ENCODE measurements at regions of chr12 and their contacts with region 1.

Region 1: GRCh38 chr12:92145731-92146496 is at the start of gene BTG1:
- DNase-seq: peak; percentile 96 to 100 (median 98)
- ATAC-seq: peak; percentile 72
- H3K4me3 ChIP-seq: peak within 1 kb of the TSS; percentile 91 to 95
- H3K4me3 Mint-ChIP-seq: peak within 1 kb of the TSS; percentile 96
- H3K27ac ChIP-seq: peak within 1 kb of the TSS; percentile 90 to 92
- H3K27ac Mint-ChIP-seq: peak within 1 kb of the TSS; percentile 99
- H3K4me1 ChIP-seq: peaks cover 23% of the 10 kb centered on the region
- H3K4me1 Mint-ChIP-seq: peaks cover 27% of the 10 kb centered on the region
- H3K27me3 ChIP-seq: no peaks in the 10 kb centered on the region
- H3K27me3 Mint-ChIP-seq: no peaks in the 10 kb centered on the region
- CTCF ChIP-seq: no peak
- total RNA-seq, gene BTG1: 1,847 to 1,850 TPM

Region 2: DNA sequence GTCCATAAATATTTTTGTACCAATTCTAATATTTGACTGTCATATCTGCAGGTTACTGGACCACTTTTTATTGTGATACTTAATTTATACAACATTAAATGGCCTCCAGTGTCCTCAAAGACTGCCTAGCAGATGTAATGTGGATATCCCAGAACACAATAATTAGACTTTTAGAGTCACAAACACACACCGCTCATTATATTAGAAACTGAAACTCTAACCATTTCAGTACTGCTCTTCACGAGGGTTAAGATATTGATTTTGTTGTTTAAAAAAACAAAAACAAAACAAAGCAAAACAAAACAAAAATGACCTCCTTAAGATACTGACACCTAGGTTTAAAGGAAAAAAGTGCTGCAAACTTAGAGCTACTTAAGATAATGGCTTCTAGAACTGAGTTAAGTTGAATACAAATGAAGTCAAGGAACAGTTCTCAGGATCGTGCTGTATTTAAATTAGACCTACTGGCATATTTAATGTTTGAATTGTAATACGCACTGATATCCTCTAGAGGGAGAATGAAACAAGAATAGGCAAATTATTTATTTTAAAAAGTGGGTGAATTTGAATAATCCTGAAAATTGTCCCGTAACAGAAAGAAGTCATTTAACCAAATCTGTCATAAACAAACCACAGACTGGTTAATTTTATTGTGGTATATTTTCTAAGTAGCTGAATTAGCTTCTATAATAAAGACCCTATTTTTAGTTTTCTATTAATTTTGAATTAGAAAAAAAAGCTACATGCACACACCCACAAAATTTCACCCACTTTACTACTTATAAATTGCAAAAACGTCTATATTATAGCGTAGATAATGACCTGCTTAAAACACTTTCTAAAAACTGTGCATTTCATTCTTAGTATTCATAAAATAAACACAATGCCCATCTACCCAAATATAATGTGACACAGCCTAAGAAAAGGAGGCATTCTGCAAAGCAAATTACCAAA is 568.1 kb before region 1 on chr12:
- CTCF ChIA-PET with region 1: interaction called, 9 read pairs
- POLR2A ChIA-PET with region 1: interaction called, 4 read pairs
- intact Hi-C with region 1: loop called (anchors 1 to 5 kb)
- DNase-seq: peak in 2 of 9 experiments; percentile 37 to 59
- ATAC-seq: peak; percentile 85
- H3K4me3 ChIP-seq: peak overlapping the region; percentile 34 to 39
- H3K4me3 Mint-ChIP-seq: peak overlapping the region; percentile 77
- H3K27ac ChIP-seq: no peak overlapping the region
- H3K27ac Mint-ChIP-seq: peak overlapping the region; percentile 50
- H3K4me1 ChIP-seq: no peaks in the 10 kb centered on the region
- H3K4me1 Mint-ChIP-seq: peaks cover 14% of the 10 kb centered on the region
- H3K27me3 ChIP-seq: no peaks in the 10 kb centered on the region
- H3K27me3 Mint-ChIP-seq: no peaks in the 10 kb centered on the region
- CTCF ChIP-seq: peak; percentile 87

Region 3: DNA sequence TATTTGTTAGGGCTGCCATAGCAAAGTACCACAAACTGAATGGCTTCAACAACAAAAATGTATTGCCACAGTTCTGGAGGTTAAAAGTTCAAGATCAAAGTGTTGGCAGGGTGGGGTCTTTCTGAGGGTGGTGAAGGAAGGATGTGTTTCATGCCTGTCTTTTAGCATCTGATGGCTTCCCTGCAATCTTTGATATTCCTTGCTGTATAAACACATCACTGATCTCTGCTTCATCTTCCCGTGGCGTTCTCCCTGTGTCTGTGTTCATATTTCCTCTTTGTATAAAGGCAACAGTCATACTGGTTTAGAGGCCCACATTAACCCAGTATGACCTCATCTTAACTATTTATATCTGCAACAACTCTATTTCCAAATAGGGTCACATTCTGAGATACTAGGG is 167.8 kb before region 1 on chr12:
- CTCF ChIA-PET with region 1: no interaction called
- POLR2A ChIA-PET with region 1: interaction called, 13 read pairs
- intact Hi-C with region 1: no loop called
- DNase-seq: peak in 8 of 9 experiments; percentile 7 to 87 (median 48)
- ATAC-seq: peak; percentile 85
- H3K4me3 ChIP-seq: no peak overlapping the region
- H3K4me3 Mint-ChIP-seq: peak overlapping the region; percentile 2
- H3K27ac ChIP-seq: peak overlapping the region; percentile 40 to 49
- H3K27ac Mint-ChIP-seq: peak overlapping the region; percentile 74
- H3K4me1 ChIP-seq: peaks cover 22% of the 10 kb centered on the region
- H3K4me1 Mint-ChIP-seq: peaks cover 60% of the 10 kb centered on the region
- H3K27me3 ChIP-seq: no peaks in the 10 kb centered on the region
- H3K27me3 Mint-ChIP-seq: no peaks in the 10 kb centered on the region
- CTCF ChIP-seq: no peak

Region 4: GRCh38 chr12:92041742-92042141 is 104.2 kb before region 1 on chr12:
- CTCF ChIA-PET with region 1: interaction called, 4 read pairs
- POLR2A ChIA-PET with region 1: interaction called, 19 read pairs
- intact Hi-C with region 1: no loop called
- DNase-seq: peak in 5 of 9 experiments; percentile 24 to 62 (median 36)
- ATAC-seq: peak; percentile 90
- H3K4me3 ChIP-seq: no peak overlapping the region
- H3K4me3 Mint-ChIP-seq: peak overlapping the region; percentile 59
- H3K27ac ChIP-seq: no peak overlapping the region
- H3K27ac Mint-ChIP-seq: peak overlapping the region; percentile 85
- H3K4me1 ChIP-seq: peaks cover 58% of the 10 kb centered on the region
- H3K4me1 Mint-ChIP-seq: peaks cover 75% of the 10 kb centered on the region
- H3K27me3 ChIP-seq: no peaks in the 10 kb centered on the region
- H3K27me3 Mint-ChIP-seq: no peaks in the 10 kb centered on the region
- CTCF ChIP-seq: peak; percentile 26

Region 5: GRCh38 chr12:92208613-92209121 is 62.8 kb after region 1 on chr12:
- CTCF ChIA-PET with region 1: interaction called, 4 read pairs
- POLR2A ChIA-PET with region 1: interaction called, 99 read pairs
- intact Hi-C with region 1: loop called (anchors 1 to 5 kb)
- DNase-seq: peak in 7 of 9 experiments; percentile 25 to 74 (median 32)
- ATAC-seq: peak; percentile 83
- H3K4me3 ChIP-seq: peak overlapping the region; percentile 28 to 32
- H3K4me3 Mint-ChIP-seq: peak overlapping the region; percentile 67
- H3K27ac ChIP-seq: peak overlapping the region; percentile 26 to 34
- H3K27ac Mint-ChIP-seq: peak overlapping the region; percentile 92
- H3K4me1 ChIP-seq: peaks cover 27% of the 10 kb centered on the region
- H3K4me1 Mint-ChIP-seq: peaks cover 40% of the 10 kb centered on the region
- H3K27me3 ChIP-seq: no peaks in the 10 kb centered on the region
- H3K27me3 Mint-ChIP-seq: no peaks in the 10 kb centered on the region
- CTCF ChIP-seq: no peak

Region 6: DNA sequence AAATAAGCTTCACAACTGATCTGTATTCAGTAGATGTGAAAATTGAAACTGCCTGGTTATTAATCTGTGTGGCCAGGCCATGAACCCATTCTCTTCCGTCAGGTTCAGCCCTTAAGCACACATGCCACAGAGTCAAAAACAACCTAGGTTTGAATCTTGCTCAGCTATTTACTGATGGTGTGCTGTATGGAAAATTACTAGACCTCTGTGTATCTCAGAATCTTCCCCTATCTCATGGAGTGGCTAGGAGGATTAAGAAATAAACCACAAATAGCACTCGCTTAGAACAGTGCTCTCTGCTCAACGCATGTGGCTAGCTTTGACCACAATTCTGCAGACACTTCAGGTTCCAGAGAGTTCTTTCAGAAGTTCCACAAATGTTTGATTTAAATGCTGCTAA is 316.1 kb after region 1 on chr12:
- CTCF ChIA-PET with region 1: no interaction called
- POLR2A ChIA-PET with region 1: interaction called, 11 read pairs
- intact Hi-C with region 1: no loop called
- DNase-seq: peak in 2 of 9 experiments; percentile 52 to 68
- ATAC-seq: peak; percentile 54
- H3K4me3 ChIP-seq: no peak overlapping the region
- H3K4me3 Mint-ChIP-seq: no peak overlapping the region
- H3K27ac ChIP-seq: peak overlapping the region in 1 of 2 experiments; percentile 75
- H3K27ac Mint-ChIP-seq: peak overlapping the region; percentile 70
- H3K4me1 ChIP-seq: peaks cover 25% of the 10 kb centered on the region
- H3K4me1 Mint-ChIP-seq: peaks cover 33% of the 10 kb centered on the region
- H3K27me3 ChIP-seq: no peaks in the 10 kb centered on the region
- H3K27me3 Mint-ChIP-seq: no peaks in the 10 kb centered on the region
- CTCF ChIP-seq: no peak

Region 7: DNA sequence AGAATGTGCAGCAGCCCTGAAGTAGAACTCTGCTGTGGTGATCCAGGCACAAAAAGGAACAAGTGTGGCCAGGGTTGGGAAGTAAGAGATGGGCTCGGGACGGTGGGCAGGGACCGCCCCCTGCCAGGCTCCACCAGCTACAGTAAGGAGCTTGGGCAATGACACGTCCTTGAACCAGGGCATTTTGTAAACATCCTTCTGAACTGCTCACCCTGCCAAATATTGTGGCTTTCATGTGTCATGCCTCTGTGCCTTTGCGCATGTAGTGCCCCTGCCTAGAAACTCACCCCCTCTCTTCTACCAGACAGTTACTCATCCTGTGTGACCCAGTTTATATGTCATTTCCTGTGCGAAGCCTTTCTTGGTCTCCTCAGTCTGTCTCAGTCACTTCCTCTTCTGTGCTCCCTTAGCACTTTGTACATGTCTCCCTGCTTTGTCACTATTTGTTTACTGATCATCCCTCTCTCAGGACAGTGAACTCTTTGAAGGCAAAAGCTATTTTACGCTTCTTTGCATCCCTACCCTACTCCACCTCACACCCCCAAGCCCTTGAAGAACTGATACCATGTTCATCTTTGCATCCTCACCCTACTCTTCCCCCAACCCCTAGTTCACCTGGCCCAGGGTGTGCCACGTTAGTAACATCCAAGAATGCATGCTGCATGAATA is 448.0 kb after region 1 on chr12:
- CTCF ChIA-PET with region 1: no interaction called
- POLR2A ChIA-PET with region 1: interaction called, 18 read pairs
- intact Hi-C with region 1: loop called (anchors 1 to 2 kb)
- DNase-seq: peak; percentile 66 to 98 (median 77)
- ATAC-seq: peak; percentile 85
- H3K4me3 ChIP-seq: no peak overlapping the region
- H3K4me3 Mint-ChIP-seq: peak overlapping the region; percentile 44
- H3K27ac ChIP-seq: peak overlapping the region; percentile 73 to 99
- H3K27ac Mint-ChIP-seq: peak overlapping the region; percentile 98
- H3K4me1 ChIP-seq: peaks cover 26% of the 10 kb centered on the region
- H3K4me1 Mint-ChIP-seq: peaks cover 39% of the 10 kb centered on the region
- H3K27me3 ChIP-seq: no peaks in the 10 kb centered on the region
- H3K27me3 Mint-ChIP-seq: no peaks in the 10 kb centered on the region
- CTCF ChIP-seq: no peak

Region 8: GRCh38 chr12:92702754-92703679 is 557.1 kb after region 1 on chr12 and contains the start of gene PLEKHG7:
- CTCF ChIA-PET with region 1: no interaction called
- POLR2A ChIA-PET with region 1: no interaction called
- intact Hi-C with region 1: no loop called
- DNase-seq: no peak
- ATAC-seq: no peak
- H3K4me3 ChIP-seq: no peak within 1 kb of the TSS
- H3K4me3 Mint-ChIP-seq: no peak within 1 kb of the TSS
- H3K27ac ChIP-seq: no peak within 1 kb of the TSS
- H3K27ac Mint-ChIP-seq: no peak within 1 kb of the TSS
- H3K4me1 ChIP-seq: no peaks in the 10 kb centered on the region
- H3K4me1 Mint-ChIP-seq: peaks cover 6% of the 10 kb centered on the region
- H3K27me3 ChIP-seq: no peaks in the 10 kb centered on the region
- H3K27me3 Mint-ChIP-seq: no peaks in the 10 kb centered on the region
- CTCF ChIP-seq: no peak
- total RNA-seq, gene PLEKHG7: not detected

Region 9: DNA sequence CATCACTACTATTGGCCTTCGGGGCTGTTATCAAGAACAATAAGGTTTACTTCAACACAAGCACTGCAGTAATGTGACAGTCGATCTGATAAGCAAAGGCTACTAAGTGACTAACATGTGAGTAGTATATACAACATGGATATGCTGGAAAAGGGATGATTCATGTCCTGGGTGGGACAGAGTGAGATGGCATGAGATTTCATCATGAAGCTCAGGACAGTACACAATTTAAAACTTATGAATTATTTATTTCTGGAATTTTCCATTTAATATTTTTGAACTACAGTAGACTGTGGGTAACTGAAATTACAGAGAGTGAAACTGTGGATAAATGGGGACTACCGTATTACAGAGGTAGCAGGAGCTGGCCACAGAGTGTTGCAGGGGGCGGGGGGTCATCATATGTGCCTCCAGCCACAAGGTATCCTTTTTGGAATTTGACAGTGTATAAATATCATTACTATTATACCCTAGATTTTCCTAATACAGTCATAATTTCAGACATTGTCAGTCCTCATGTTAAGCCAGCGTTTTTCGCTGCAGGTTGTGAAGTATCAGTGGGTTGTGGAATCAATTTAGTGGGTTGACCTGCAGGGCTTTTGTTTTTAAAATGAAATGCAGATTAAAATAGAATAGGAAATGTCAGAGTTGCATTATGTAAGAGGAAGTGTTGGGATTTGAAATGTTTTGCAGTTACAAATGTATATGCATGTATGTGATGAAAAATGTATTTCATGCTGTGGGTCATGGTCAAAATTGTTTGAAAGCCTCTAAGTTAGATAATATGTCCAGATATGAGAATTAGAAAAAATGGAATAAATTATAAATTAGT is 1083.8 kb after region 1 on chr12:
- CTCF ChIA-PET with region 1: no interaction called
- POLR2A ChIA-PET with region 1: no interaction called
- intact Hi-C with region 1: no loop called
- DNase-seq: no peak
- ATAC-seq: no peak
- H3K4me3 ChIP-seq: no peak overlapping the region
- H3K4me3 Mint-ChIP-seq: no peak overlapping the region
- H3K27ac ChIP-seq: no peak overlapping the region
- H3K27ac Mint-ChIP-seq: no peak overlapping the region
- H3K4me1 ChIP-seq: no peaks in the 10 kb centered on the region
- H3K4me1 Mint-ChIP-seq: no peaks in the 10 kb centered on the region
- H3K27me3 ChIP-seq: no peaks in the 10 kb centered on the region
- H3K27me3 Mint-ChIP-seq: peaks cover 4% of the 10 kb centered on the region
- CTCF ChIP-seq: no peak

Measured in CD8-positive, alpha-beta T cell (primary cell).